AG04449 (cell line): ENCODE measurements at regions of chr1 and their contacts with region 1.

Region 1: GRCh38 chr1:160291248-160292220 is 6.6 kb upstream of the PEX19 start:
- DNase-seq: no peak
- H3K4me3 ChIP-seq: no peak overlapping the region
- CTCF ChIP-seq: peak; percentile 75

Region 2: GRCh38 chr1:160098852-160099561 is 192.5 kb before region 1 on chr1:
- CTCF ChIA-PET with region 1: interaction called, 92 read pairs
- POLR2A ChIA-PET with region 1: interaction called, 3 read pairs
- DNase-seq: peak; percentile 29
- H3K4me3 ChIP-seq: peak overlapping the region; percentile 72
- CTCF ChIP-seq: no peak

Region 3: DNA sequence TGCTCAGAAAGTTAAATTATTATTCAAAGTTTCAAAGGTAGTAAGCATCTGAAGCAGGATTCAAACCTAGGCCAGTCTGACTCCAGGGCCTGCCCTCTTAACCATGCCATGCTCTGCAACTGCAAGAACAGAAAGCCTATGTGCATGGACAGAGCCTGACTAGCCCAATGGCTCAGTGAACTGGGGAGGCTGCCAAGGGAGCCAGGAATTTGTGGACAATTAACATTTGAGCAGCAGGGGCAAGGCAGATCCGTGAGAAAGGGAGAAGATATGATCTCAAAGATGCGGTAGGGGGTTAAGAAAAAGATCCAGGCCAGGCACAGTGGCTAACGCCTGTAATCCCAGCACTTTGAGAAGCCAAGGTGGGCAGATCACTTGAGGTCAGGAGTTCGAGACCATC is 146.6 kb before region 1 on chr1:
- CTCF ChIA-PET with region 1: no interaction called
- POLR2A ChIA-PET with region 1: no interaction called
- DNase-seq: no peak
- H3K4me3 ChIP-seq: no peak overlapping the region
- CTCF ChIP-seq: no peak

Region 4: GRCh38 chr1:160193091-160193819 is 98.3 kb before region 1 on chr1:
- CTCF ChIA-PET with region 1: interaction called, 148 read pairs
- POLR2A ChIA-PET with region 1: no interaction called
- DNase-seq: peak; percentile 33
- H3K4me3 ChIP-seq: no peak overlapping the region
- CTCF ChIP-seq: peak; percentile 99

Region 5: DNA sequence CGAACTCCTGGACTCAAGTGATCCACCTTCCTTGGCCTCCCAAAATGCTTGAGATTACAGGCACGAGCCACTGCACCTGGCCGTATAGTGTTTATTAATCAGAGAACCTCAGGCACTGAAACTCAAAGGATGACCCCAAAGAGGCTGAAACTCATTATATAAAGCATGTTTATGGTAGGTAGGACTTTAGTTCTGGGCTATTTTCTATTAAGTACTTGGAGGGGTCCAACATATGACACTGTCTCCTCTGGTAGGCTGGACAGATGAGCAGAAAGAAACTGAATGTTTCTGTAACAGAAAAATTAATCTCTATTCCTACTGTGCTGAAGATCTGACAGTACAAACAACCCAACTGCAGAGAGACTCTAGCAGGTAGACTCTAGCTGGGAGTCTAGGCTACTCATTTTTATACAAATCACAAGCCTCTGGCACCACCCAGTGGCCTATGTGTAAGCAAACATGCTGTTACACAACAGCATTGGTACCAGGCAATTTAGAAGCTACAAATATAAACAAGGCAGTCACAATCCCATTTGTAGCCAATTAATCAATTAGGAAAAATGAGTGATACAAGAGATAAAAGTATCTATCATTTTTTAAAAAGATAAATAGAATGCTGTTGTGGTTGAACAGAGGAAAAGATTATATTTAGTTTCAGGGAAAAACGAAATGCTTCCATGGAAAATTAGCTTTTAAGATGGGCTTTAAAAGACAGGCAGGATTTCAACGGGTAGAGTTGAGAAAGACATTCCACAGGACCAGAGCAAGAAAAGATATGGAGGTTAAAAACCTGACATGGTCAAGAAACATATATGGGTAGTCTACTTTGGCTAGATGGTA is 39.6 kb before region 1 on chr1:
- CTCF ChIA-PET with region 1: interaction called, 13 read pairs
- POLR2A ChIA-PET with region 1: no interaction called
- DNase-seq: no peak
- H3K4me3 ChIP-seq: no peak overlapping the region
- CTCF ChIP-seq: peak; percentile 54

Region 6: GRCh38 chr1:160307118-160307854 is 15.8 kb after region 1 on chr1:
- CTCF ChIA-PET with region 1: interaction called, 170 read pairs
- POLR2A ChIA-PET with region 1: interaction called, 3 read pairs
- DNase-seq: no peak
- H3K4me3 ChIP-seq: no peak overlapping the region
- CTCF ChIP-seq: no peak

Region 7: GRCh38 chr1:160342953-160343869 is 51.7 kb after region 1 on chr1 and contains the starts of genes COPA and NCSTN:
- CTCF ChIA-PET with region 1: interaction called, 71 read pairs
- POLR2A ChIA-PET with region 1: no interaction called
- DNase-seq: peak; percentile 84
- H3K4me3 ChIP-seq: peak within 1 kb of the TSS; percentile 93
- CTCF ChIP-seq: no peak